GM13977 (cell line): ENCODE measurements at regions of chr17 and their contacts with region 1.

Region 1: GRCh38 chr17:29645515-29646051 is 22.9 kb upstream of the CORO6 start:
- DNase-seq: no peak
- CTCF ChIP-seq: no peak

Region 2: DNA sequence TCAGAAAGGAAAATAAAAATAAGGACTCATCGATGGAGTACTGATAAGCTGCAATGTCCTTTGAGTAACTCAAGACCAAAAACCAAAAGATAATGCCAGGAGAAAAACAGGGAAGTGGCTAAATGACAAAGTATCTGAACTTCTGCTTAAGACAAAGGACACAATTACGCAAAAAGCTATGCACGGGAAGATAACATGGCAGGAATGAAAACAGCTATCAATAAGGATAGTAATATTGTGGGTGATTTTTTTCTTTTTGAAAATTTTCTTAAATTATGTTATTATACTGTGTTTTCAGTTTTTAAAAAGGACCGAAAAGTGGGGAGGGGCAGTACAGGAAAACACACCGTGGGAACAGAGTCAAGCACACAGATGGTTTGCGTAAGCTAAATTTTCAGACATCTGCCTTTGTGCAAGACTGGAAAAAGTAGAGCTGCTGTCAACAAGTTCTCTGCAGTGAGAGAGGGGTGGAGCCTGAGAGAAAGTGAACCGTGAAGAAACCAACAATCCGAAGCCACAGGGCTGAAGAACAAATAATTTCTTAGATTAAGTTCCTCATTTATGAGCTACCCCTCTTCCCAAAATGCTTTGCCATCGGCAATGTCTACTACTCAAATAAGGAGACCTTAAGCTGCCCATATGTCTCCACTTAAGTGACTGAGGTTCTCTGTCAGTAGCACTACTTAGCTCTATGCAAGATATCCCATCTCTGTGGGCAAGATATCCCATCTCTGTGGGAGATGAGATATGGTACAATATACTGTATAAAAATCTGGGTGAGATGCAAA is 77.0 kb after region 1 on chr17:
- in situ Hi-C with region 1: no loop called
- DNase-seq: peak; percentile 63
- CTCF ChIP-seq: no peak

Region 3: DNA sequence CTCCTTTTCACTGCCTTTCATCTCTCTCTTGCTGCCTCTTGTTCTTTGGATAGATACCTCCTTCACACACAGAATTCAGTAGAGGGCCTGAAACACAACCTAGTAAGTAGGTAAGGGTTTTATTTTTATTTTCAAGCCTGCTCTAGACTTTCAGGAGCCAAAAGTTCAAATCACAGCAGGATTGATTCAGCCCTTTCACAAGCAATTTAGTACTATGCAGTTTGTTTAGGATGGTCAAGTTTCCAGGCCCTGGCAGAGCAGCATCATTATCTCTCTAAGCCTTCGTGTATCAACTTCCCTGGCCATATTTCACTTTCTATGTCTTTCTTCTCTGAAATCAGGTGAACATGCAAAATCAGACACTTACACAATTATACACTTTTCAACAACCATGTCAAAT is 126.0 kb after region 1 on chr17:
- in situ Hi-C with region 1: loop called (anchors 10 kb)
- DNase-seq: no peak
- CTCF ChIP-seq: no peak

Region 4: GRCh38 chr17:29931231-29931932 is 285.8 kb after region 1 on chr17:
- in situ Hi-C with region 1: loop called (anchors 25 kb)
- DNase-seq: peak; percentile 68
- CTCF ChIP-seq: peak; percentile 77